ENCODE measurements at regions of chr4 and their contacts with region 1.

Region 1: DNA sequence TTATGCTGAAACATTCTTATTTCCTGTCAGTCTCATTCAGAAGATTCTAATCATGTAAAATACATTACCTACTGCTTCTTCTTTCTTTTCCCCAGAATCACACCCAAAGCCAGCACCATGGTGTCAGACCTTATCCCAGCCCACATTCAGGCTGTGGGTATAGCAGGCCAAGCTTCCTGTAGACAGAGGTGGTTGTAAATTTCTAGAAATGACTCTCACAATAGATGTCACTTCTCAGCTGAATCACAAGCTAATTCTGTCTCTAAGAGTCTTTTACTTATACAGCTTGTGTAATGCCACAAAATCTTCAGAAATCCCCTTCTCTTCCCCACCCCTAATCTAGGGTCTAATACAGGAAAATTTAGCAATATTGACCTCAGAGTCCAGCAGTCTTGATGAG is 239.6 kb downstream of the PARM1 start:
- DNase-seq: no peak
- H3K4me3 ChIP-seq: no peak overlapping the region
- CTCF ChIP-seq: no peak
- POLR2A ChIP-seq: no peak

Region 2: GRCh38 chr4:74254386-74254785 is 918.2 kb before region 1 on chr4:
- intact Hi-C with region 1: loop called (anchors 5 kb)
- DNase-seq: no peak
- H3K4me3 ChIP-seq: no peak overlapping the region
- CTCF ChIP-seq: no peak
- POLR2A ChIP-seq: no peak